ENCODE measurements at regions of chr2 and their contacts with region 1.

Region 1: DNA sequence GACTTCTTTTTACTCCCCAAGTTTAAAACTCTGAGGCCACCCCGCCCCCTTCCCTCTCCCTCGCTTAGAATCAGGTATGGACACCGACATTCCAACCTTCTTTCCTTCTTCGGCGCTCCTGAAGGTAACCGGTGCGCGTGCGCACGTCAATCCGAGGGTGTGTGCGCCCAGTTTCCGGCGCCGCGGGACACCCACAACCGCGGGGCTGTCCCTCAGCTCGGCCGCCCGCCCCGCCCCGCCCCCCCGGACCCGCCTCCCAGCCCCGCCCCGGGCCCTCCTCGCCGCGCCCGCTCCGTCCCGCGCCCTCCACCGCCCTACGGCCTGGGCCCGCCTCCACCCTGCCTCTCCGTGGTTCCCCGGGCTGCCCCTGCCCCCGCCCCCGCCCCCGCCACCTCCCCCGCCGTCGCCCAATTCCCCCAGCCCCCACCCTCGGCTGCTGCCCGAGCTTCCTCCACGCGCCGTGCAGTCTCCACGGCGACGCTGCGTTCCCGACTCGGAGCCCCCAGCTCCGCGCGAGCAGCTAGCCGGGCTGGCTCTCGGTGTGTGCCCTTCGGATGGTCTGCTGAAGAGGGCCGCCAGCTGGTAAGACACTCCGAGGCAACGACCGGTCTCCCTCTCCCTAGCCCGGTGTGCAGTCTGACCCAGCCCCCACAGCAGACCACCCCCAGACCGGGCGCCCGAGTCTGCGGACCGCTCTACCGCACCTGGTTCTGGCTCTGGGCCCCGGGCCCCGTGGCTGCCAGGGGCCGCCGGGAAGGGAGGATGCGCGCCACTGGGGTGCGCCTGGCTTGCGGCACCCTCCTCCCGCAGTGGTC is 635 bp downstream of the ERICH2 start:
- DNase-seq: no peak
- H3K4me3 ChIP-seq: peak overlapping the region; percentile 68
- H3K27ac ChIP-seq: no peak overlapping the region
- H3K27me3 ChIP-seq: peaks cover 13% of the 10 kb centered on the region
- CTCF ChIP-seq: no peak

Region 2: GRCh38 chr2:170523506-170523905 is 247.3 kb before region 1 on chr2:
- CTCF ChIA-PET with region 1: interaction called, 11 read pairs
- POLR2A ChIA-PET with region 1: no interaction called
- DNase-seq: no peak
- H3K4me3 ChIP-seq: no peak overlapping the region
- H3K27ac ChIP-seq: no peak overlapping the region
- H3K27me3 ChIP-seq: peaks cover 5% of the 10 kb centered on the region
- CTCF ChIP-seq: no peak

Region 3: DNA sequence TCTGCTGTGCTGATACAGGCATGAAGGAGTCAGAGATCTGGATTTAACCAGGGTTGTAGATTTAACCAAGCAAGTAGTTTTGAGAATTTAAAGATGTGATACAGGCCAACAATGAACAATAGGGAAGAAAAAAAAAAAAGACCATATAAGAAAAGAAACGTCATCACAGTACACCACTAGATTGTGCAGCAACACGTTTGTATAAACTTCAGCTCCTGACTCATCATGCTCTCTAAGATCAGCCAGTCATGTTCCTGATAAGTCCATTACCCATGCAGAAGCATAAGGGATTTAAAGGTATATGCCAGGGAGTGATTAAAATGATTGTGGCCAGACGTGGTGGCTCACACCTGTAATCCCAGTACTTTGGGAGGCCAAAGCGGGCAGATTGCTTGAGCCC is 22.9 kb before region 1 on chr2:
- CTCF ChIA-PET with region 1: no interaction called
- POLR2A ChIA-PET with region 1: no interaction called
- DNase-seq: peak; percentile 69
- H3K4me3 ChIP-seq: no peak overlapping the region
- H3K27ac ChIP-seq: peak overlapping the region; percentile 43
- H3K27me3 ChIP-seq: no peaks in the 10 kb centered on the region
- CTCF ChIP-seq: no peak

Measured in AG04450 (cell line).